ENCODE measurements at regions of chr10 and their contacts with region 1.

Region 1: GRCh38 chr10:71899665-71900412 is 48.8 kb upstream of the PSAP start:
- DNase-seq: no peak
- ATAC-seq: no peak
- H3K4me3 ChIP-seq: no peak overlapping the region
- H3K27ac ChIP-seq: no peak overlapping the region
- H3K4me1 ChIP-seq: no peaks in the 10 kb centered on the region
- H3K27me3 ChIP-seq: no peaks in the 10 kb centered on the region
- CTCF ChIP-seq: no peak
- POLR2A ChIP-seq: no peak

Region 2: GRCh38 chr10:71260622-71261325 is 639.1 kb before region 1 on chr10:
- in situ Hi-C with region 1: no loop called
- intact Hi-C with region 1: no loop called
- DNase-seq: no peak
- ATAC-seq: no peak
- H3K4me3 ChIP-seq: no peak overlapping the region
- H3K27ac ChIP-seq: peak overlapping the region in 2 of 4 donors; percentile 35 to 36
- H3K4me1 ChIP-seq: peaks cover 50 to 62% of the 10 kb centered on the region in 2 donors
- H3K27me3 ChIP-seq: no peaks in the 10 kb centered on the region
- CTCF ChIP-seq: no peak
- POLR2A ChIP-seq: no peak

Region 3: GRCh38 chr10:71957546-71958275 is 57.9 kb after region 1 on chr10:
- in situ Hi-C with region 1: no loop called
- intact Hi-C with region 1: loop called (anchors 5 kb)
- DNase-seq: no peak
- ATAC-seq: no peak
- H3K4me3 ChIP-seq: no peak overlapping the region
- H3K27ac ChIP-seq: no peak overlapping the region
- H3K4me1 ChIP-seq: peaks cover 6 to 11% of the 10 kb centered on the region in 2 donors
- H3K27me3 ChIP-seq: no peaks in the 10 kb centered on the region
- CTCF ChIP-seq: no peak
- POLR2A ChIP-seq: no peak